Lower lobe of right lung (tissue), 2 donors: ENCODE measurements at regions of chr12 and their contacts with region 1.

Region 1: GRCh38 chr12:119115296-119115905 is 63.3 kb upstream of the HSPB8 start:
- DNase-seq: no peak
- ATAC-seq: peak; percentile 57 to 76
- H3K4me3 ChIP-seq: no peak overlapping the region
- H3K27ac ChIP-seq: no peak overlapping the region
- H3K4me1 ChIP-seq: no peaks in the 10 kb centered on the region
- H3K27me3 ChIP-seq: no peaks in the 10 kb centered on the region
- CTCF ChIP-seq: peak; percentile 88

Region 2: DNA sequence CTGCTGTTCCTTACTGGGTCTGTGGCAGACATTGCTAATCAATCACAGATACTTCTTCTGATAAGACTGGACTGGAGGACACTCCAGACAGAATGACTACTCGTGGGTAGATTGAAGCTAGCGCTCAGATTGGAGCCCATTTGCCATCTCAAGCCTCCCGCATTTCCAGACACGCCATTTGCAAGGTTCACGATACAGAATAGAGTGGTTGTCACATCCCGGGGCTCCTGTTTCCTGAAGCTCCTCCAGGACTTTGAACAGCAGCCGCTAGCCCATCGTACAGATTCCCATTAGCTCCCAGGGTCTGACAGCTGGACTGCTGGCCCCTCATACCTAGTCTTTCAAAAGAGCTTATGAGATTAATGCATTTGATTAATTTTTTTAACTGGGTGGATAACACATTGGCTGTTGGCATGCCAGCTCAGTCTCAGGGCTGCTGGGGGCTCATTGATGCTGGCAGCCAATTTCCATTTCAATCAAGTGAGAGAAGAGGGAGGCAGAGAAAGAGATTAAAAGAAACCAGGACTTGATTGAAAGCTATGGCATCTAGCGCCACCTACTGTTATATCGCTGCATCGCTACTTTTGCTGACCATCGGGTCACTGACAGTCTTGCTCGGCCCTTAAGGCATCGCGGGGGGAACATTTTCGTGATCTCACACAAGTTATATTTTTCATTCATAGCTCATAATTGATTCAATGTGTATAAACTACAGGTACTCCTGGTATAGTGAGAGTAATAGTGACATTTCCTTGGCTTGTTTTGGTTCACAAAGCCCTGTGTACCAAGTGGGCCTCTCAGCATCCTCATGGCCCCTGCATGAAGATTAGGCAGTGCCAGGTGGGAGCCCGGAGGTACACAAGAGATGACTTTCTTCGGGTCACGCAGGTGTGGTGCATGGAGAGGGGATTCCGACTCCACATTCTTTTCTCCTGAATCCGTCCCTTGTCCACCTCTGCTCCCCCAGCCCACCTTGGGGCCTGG is 297.7 kb after region 1 on chr12:
- intact Hi-C with region 1: loop called (anchors 10 kb)
- DNase-seq: no peak
- ATAC-seq: peak; percentile 50 to 75
- H3K4me3 ChIP-seq: peak overlapping the region; percentile 20
- H3K27ac ChIP-seq: no peak overlapping the region
- H3K4me1 ChIP-seq: peaks cover 10% of the 10 kb centered on the region
- H3K27me3 ChIP-seq: no peaks in the 10 kb centered on the region
- CTCF ChIP-seq: peak; percentile 89

Region 3: DNA sequence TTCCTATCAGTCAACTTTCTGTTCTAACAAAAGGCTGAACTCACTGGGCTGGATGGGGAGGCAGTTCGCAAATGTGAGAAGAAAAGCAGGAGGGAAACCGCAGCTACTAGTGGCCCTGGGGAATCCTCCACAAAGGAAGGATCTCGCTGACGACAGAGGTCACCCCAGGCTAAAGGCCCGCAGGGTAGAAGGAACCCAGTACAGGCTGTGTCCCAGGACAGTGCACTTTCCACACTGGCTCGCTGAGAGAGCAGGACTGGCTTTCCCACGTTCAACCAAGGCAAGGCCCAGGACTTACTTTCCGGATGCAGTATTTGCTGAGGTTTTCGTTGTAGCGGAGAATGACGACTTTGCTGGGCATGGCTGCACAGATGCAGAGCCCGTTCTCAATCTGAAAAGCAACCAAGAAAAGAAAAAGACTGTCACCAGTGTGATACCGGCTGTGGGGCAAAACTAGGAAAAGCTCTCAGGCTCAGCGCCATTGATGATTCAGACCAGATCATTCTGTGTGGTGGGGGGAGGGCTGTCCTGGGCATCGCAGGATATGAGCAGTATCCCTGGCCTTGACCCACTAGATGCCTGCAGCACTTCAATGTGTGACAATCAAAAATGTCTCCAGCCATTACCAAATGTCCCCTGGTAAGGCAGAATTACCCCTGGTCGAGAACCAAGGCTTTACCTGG is 588.8 kb after region 1 on chr12:
- intact Hi-C with region 1: no loop called
- DNase-seq: no peak
- ATAC-seq: no peak
- H3K4me3 ChIP-seq: no peak overlapping the region
- H3K27ac ChIP-seq: no peak overlapping the region
- H3K4me1 ChIP-seq: no peaks in the 10 kb centered on the region
- H3K27me3 ChIP-seq: no peaks in the 10 kb centered on the region
- CTCF ChIP-seq: no peak